Lower leg skin (tissue), 4 donors: ENCODE measurements at regions of chr20 and their contacts with region 1.

Region 1: DNA sequence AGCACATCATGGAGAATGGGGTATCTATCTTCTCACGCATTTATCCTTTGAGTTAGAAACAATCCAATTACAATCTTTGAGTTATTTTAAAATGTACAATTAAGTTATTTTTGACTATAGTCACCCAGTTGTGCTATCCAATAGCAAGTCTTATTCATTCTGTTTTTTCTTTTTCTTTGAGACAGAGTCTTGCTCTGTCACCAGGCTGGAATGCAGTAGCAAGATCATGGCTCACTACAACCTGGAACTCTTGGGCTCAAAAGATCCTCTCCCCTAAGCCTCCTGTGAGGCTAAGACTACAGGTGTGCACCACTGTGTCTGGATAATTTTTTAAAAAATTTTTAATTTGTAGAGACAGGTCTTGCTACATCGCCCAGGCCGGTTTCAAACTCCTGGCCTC is 201.5 kb upstream of the ZNF217 start:
- DNase-seq: no peak
- H3K4me3 ChIP-seq: no peak overlapping the region
- CTCF ChIP-seq: no peak
- POLR2A ChIP-seq: no peak

Region 2: GRCh38 chr20:53162251-53162835 is 632.8 kb before region 1 on chr20:
- intact Hi-C with region 1: no loop called
- DNase-seq: peak in 1 of 2 donors; percentile 29
- H3K4me3 ChIP-seq: no peak overlapping the region
- CTCF ChIP-seq: no peak
- POLR2A ChIP-seq: no peak

Region 3: GRCh38 chr20:53750827-53751619 is 44.1 kb before region 1 on chr20:
- intact Hi-C with region 1: loop called (anchors 1 kb)
- DNase-seq: peak in 1 of 2 donors; percentile 62
- H3K4me3 ChIP-seq: no peak overlapping the region
- CTCF ChIP-seq: no peak
- POLR2A ChIP-seq: no peak

Region 4: GRCh38 chr20:53869466-53870258 is 74.5 kb after region 1 on chr20:
- intact Hi-C with region 1: loop called (anchors 10 kb)
- DNase-seq: peak in 1 of 2 donors; percentile 79
- H3K4me3 ChIP-seq: no peak overlapping the region
- CTCF ChIP-seq: peak in 1 of 3 donors; percentile 48
- POLR2A ChIP-seq: no peak